MCF 10A (cell line): ENCODE measurements at regions of chr12 and their contacts with region 1.

Region 1: DNA sequence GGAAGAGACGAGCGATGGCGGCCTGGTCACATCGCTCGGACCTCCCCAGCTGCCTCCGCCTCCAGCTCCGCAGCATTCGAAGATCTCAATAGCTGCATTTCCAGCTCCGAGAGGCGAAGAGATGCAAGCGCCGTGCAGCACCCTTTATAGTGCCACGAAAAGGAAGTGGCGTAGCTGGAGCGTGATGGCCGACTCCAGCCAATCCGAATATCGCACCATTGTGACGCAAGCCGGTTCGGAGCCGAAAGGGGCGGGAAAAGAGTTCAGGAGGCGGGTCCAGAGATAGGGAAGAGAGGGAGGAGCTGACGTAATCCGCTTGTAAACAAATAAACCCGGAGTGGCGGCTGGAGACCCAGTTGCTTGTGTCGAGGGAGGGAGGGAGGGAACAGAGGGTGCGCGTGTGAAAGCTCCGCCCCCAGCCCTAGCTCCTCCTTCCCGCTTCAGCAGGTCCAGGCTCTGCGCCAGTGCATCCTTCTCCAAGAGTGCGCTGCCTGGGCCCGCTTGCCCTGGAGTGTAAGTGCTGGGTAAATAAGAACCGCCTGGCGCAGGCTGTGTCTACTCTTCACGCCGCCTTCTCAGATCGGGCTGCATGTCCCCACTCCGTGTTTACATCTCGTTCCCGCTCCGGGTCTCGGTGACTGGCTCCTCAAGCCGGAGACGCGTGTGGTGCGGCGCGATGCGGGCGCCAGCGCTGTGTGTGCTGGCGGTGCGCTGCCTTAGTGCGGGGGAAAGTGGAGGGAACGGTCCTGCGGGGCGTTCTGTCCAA is at the start of gene BTG1:
- DNase-seq: peak; percentile 100
- H3K4me3 Mint-ChIP-seq: peak within 1 kb of the TSS; percentile 89
- H3K27ac Mint-ChIP-seq: peak within 1 kb of the TSS; percentile 74
- H3K4me1 Mint-ChIP-seq: peaks cover 16% of the 10 kb centered on the region
- H3K27me3 Mint-ChIP-seq: no peaks in the 10 kb centered on the region
- CTCF ChIP-seq: no peak
- total RNA-seq, gene BTG1: 128 and 129 TPM in 2 replicates

Region 2: DNA sequence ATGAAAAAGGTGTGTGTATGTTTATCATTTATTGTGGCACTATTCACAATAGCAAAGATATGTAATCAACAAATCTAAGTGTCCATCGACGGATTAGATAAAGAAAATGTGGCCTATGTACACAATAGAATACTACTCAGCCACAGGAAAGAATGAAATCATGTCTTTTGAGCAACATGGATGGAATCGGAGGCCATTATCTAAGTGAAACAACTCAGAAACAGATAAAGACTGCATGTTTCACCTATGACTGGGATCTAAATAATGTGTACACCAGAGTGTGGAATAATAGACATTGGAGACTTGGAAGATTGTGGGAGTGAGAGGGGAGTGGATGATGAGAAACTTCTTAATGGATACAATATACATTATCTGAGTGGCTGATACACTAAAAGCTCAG is 1235.0 kb before region 1 on chr12:
- CTCF ChIA-PET with region 1: no interaction called
- POLR2A ChIA-PET with region 1: no interaction called
- intact Hi-C with region 1: no loop called
- DNase-seq: no peak
- H3K4me3 Mint-ChIP-seq: no peak overlapping the region
- H3K27ac Mint-ChIP-seq: no peak overlapping the region
- H3K4me1 Mint-ChIP-seq: peaks cover 11% of the 10 kb centered on the region
- H3K27me3 Mint-ChIP-seq: no peaks in the 10 kb centered on the region
- CTCF ChIP-seq: no peak

Region 3: DNA sequence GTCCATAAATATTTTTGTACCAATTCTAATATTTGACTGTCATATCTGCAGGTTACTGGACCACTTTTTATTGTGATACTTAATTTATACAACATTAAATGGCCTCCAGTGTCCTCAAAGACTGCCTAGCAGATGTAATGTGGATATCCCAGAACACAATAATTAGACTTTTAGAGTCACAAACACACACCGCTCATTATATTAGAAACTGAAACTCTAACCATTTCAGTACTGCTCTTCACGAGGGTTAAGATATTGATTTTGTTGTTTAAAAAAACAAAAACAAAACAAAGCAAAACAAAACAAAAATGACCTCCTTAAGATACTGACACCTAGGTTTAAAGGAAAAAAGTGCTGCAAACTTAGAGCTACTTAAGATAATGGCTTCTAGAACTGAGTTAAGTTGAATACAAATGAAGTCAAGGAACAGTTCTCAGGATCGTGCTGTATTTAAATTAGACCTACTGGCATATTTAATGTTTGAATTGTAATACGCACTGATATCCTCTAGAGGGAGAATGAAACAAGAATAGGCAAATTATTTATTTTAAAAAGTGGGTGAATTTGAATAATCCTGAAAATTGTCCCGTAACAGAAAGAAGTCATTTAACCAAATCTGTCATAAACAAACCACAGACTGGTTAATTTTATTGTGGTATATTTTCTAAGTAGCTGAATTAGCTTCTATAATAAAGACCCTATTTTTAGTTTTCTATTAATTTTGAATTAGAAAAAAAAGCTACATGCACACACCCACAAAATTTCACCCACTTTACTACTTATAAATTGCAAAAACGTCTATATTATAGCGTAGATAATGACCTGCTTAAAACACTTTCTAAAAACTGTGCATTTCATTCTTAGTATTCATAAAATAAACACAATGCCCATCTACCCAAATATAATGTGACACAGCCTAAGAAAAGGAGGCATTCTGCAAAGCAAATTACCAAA is 568.1 kb before region 1 on chr12:
- CTCF ChIA-PET with region 1: interaction called, 4 read pairs
- POLR2A ChIA-PET with region 1: interaction called, 38 read pairs
- intact Hi-C with region 1: loop called (anchors 2 kb)
- DNase-seq: peak; percentile 32
- H3K4me3 Mint-ChIP-seq: peak overlapping the region; percentile 57
- H3K27ac Mint-ChIP-seq: peak overlapping the region; percentile 85
- H3K4me1 Mint-ChIP-seq: peaks cover 20% of the 10 kb centered on the region
- H3K27me3 Mint-ChIP-seq: no peaks in the 10 kb centered on the region
- CTCF ChIP-seq: peak; percentile 52

Region 4: GRCh38 chr12:91854725-91855124 is 291.2 kb before region 1 on chr12:
- CTCF ChIA-PET with region 1: interaction called, 3 read pairs
- POLR2A ChIA-PET with region 1: interaction called, 19 read pairs
- intact Hi-C with region 1: loop called (anchors 1 kb)
- DNase-seq: peak; percentile 26
- H3K4me3 Mint-ChIP-seq: peak overlapping the region; percentile 13
- H3K27ac Mint-ChIP-seq: peak overlapping the region; percentile 93
- H3K4me1 Mint-ChIP-seq: peaks cover 41% of the 10 kb centered on the region
- H3K27me3 Mint-ChIP-seq: no peaks in the 10 kb centered on the region
- CTCF ChIP-seq: no peak

Region 5: GRCh38 chr12:91948504-91948903 is 197.4 kb before region 1 on chr12:
- CTCF ChIA-PET with region 1: no interaction called
- POLR2A ChIA-PET with region 1: no interaction called
- intact Hi-C with region 1: no loop called
- DNase-seq: no peak
- H3K4me3 Mint-ChIP-seq: no peak overlapping the region
- H3K27ac Mint-ChIP-seq: no peak overlapping the region
- H3K4me1 Mint-ChIP-seq: no peaks in the 10 kb centered on the region
- H3K27me3 Mint-ChIP-seq: no peaks in the 10 kb centered on the region
- CTCF ChIP-seq: no peak

Region 6: GRCh38 chr12:92078167-92079053 is 67.5 kb before region 1 on chr12:
- CTCF ChIA-PET with region 1: no interaction called
- POLR2A ChIA-PET with region 1: interaction called, 41 read pairs
- intact Hi-C with region 1: loop called (anchors 2 kb)
- DNase-seq: peak; percentile 96
- H3K4me3 Mint-ChIP-seq: peak overlapping the region; percentile 26
- H3K27ac Mint-ChIP-seq: peak overlapping the region; percentile 95
- H3K4me1 Mint-ChIP-seq: peaks cover 60% of the 10 kb centered on the region
- H3K27me3 Mint-ChIP-seq: no peaks in the 10 kb centered on the region
- CTCF ChIP-seq: no peak

Region 7: DNA sequence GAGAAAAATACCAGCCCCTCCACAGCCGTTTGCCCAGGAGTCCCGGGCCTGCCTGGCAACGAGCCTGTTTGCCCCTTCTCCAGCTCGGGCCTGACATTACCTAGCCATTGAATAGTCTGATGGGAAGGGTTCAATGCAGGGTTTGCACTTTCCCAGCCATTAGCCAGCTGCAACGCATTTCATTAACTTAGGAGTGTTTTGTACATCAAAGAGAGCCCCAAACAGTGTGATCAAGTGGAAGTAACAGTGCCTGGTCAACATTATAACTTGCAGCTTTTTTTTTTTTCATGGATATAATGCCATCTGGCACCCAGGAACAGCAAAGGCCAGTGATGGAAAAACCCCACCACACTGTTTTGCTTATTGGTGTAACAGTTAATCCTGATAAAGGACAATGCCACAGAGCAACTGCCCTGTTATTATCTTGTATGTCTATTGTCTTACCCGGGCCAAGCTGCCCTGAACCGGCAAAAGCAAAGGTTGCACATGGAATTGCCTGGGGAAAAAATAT is 38.2 kb before region 1 on chr12:
- CTCF ChIA-PET with region 1: no interaction called
- POLR2A ChIA-PET with region 1: no interaction called
- intact Hi-C with region 1: no loop called
- DNase-seq: no peak
- H3K4me3 Mint-ChIP-seq: no peak overlapping the region
- H3K27ac Mint-ChIP-seq: peak overlapping the region; percentile 21
- H3K4me1 Mint-ChIP-seq: peaks cover 22% of the 10 kb centered on the region
- H3K27me3 Mint-ChIP-seq: no peaks in the 10 kb centered on the region
- CTCF ChIP-seq: no peak

Region 8: DNA sequence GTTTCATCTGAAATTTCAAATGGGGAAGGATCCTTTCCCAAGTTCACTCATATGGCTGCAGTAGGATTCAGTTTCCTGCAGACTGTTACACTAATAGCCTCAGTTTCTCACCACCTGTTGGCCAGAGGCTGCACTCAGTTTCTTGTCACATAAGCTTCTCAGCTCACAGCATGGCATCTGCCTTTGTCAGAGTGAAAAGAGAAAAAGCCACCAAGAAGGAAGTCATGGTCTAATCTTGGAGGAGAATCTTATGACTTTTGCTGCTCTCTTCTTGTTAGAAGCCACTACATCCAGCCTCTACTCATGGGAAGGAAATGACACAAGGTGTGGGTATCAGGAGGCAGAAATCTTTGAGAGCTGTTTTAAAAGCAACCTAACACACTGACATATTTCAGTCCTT is 39.1 kb after region 1 on chr12:
- CTCF ChIA-PET with region 1: no interaction called
- POLR2A ChIA-PET with region 1: no interaction called
- intact Hi-C with region 1: no loop called
- DNase-seq: no peak
- H3K4me3 Mint-ChIP-seq: no peak overlapping the region
- H3K27ac Mint-ChIP-seq: no peak overlapping the region
- H3K4me1 Mint-ChIP-seq: peaks cover 5% of the 10 kb centered on the region
- H3K27me3 Mint-ChIP-seq: no peaks in the 10 kb centered on the region
- CTCF ChIP-seq: no peak

Region 9: DNA sequence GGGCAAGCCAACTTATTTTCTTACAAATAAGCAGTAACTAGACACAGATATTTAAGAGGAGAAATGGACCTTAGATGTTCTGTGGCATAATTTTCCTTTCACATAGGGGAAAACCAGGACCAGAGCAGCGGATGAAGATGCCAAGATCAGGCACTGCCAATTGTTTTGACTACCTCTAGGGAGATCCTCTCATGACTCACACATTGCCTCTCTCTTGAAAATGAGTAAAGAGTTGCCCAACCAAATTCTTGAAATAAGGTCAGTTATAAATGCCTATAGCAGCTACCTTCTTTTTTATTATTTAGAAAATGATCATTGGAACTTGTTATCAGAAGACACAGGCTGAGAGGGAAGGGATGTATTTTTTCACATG is 293.5 kb after region 1 on chr12:
- CTCF ChIA-PET with region 1: no interaction called
- POLR2A ChIA-PET with region 1: interaction called, 11 read pairs
- intact Hi-C with region 1: no loop called
- DNase-seq: peak; percentile 92
- H3K4me3 Mint-ChIP-seq: peak overlapping the region; percentile 0
- H3K27ac Mint-ChIP-seq: peak overlapping the region; percentile 44
- H3K4me1 Mint-ChIP-seq: peaks cover 28% of the 10 kb centered on the region
- H3K27me3 Mint-ChIP-seq: no peaks in the 10 kb centered on the region
- CTCF ChIP-seq: no peak

Region 10: DNA sequence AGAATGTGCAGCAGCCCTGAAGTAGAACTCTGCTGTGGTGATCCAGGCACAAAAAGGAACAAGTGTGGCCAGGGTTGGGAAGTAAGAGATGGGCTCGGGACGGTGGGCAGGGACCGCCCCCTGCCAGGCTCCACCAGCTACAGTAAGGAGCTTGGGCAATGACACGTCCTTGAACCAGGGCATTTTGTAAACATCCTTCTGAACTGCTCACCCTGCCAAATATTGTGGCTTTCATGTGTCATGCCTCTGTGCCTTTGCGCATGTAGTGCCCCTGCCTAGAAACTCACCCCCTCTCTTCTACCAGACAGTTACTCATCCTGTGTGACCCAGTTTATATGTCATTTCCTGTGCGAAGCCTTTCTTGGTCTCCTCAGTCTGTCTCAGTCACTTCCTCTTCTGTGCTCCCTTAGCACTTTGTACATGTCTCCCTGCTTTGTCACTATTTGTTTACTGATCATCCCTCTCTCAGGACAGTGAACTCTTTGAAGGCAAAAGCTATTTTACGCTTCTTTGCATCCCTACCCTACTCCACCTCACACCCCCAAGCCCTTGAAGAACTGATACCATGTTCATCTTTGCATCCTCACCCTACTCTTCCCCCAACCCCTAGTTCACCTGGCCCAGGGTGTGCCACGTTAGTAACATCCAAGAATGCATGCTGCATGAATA is 448.0 kb after region 1 on chr12:
- CTCF ChIA-PET with region 1: no interaction called
- POLR2A ChIA-PET with region 1: interaction called, 11 read pairs
- intact Hi-C with region 1: no loop called
- DNase-seq: peak; percentile 79
- H3K4me3 Mint-ChIP-seq: peak overlapping the region; percentile 12
- H3K27ac Mint-ChIP-seq: peak overlapping the region; percentile 94
- H3K4me1 Mint-ChIP-seq: peaks cover 42% of the 10 kb centered on the region
- H3K27me3 Mint-ChIP-seq: no peaks in the 10 kb centered on the region
- CTCF ChIP-seq: no peak